ENCODE measurements at regions of chr10 and their contacts with region 1.

Region 1: GRCh38 chr10:69655124-69655867 is 25.2 kb downstream of the FAM241B start:
- DNase-seq: no peak
- H3K4me3 Mint-ChIP-seq: no peak overlapping the region
- H3K27ac Mint-ChIP-seq: no peak overlapping the region
- H3K4me1 Mint-ChIP-seq: no peaks in the 10 kb centered on the region
- H3K27me3 Mint-ChIP-seq: peaks cover 48% of the 10 kb centered on the region
- CTCF ChIP-seq: no peak

Region 2: DNA sequence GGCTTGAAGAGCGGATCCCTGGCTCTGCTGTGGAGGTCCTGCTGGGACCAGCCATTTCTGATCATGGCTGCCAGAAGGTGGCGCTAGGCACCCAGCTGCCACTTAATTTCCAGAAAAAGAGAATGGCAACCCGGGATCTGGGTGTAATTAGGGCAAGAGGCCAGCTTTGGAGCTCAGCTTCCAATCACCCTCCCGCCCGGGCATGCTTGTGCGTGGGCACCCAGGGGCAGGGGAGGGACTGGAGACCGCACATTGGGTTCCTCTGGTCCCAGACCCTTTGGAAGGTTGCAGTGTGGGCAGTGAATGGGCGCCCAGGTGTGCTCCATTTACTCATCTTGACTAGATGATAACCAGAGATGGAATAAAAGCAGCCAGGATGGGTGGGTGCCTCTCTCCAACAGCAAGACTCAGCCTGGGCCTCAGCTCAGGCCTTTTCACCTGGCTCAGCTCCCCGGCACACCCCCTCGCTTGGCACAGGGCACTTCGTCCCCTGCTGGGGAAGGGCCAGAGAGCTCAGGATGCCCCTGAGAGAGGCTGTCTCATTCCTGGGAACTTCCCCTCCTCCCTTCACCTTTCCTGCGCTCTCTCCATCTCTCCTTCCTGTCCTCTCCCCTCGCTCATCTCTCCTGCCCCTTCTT is 10.5 kb before region 1 on chr10:
- CTCF ChIA-PET with region 1: interaction called, 17 read pairs
- POLR2A ChIA-PET with region 1: interaction called, 3 read pairs
- intact Hi-C with region 1: no loop called
- DNase-seq: peak; percentile 73
- H3K4me3 Mint-ChIP-seq: no peak overlapping the region
- H3K27ac Mint-ChIP-seq: no peak overlapping the region
- H3K4me1 Mint-ChIP-seq: peaks cover 15% of the 10 kb centered on the region
- H3K27me3 Mint-ChIP-seq: no peaks in the 10 kb centered on the region
- CTCF ChIP-seq: peak; percentile 88

Measured in MCF 10A (cell line).